ENCODE measurements at regions of chrX and their contacts with region 1.

Region 1: DNA sequence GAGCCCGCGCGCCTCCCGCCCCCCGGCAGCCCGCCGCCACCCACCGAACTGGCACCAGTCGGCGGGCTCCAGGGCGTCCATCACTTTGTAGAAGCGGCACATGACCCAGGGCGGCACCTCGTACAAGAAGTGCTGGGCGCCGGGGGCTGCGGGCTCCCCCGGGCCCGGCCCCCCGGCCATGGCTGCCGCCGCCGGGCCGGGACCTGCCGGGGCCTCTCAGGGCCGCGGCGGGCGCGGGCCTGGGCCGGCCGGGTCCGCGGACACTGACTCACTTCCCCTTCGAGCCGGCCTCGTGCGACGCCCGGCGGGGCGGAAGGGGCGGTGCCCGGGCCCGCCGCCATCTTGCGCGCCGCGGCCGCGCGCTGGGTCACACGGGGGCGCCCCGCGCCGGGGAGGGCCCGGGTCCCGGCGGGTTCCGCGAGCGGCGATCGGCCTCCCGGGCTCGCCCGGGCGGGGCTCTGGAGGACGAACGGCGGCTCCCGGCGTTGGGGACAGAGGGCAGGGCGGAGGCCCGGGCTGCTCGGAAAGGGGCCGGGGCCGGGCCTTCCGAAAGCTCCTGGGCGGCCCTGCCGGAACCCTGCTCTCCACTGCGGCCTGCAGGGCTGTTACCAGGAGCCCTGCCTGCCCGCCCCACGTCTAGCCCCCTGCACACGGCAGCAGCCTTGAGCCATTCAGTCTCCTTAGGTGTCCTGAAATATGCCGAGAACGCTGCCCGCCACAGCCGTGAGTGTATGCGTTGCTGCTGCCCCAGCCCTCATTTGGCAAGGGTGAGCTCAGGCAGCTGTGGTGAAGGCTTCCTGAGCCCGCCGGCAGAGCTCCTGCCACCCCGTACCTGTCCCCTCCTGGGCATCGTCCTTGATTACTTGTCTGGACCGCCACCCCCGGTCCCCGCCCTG is at the start of gene IRAK1:
- DNase-seq: peak; percentile 90
- H3K4me3 Mint-ChIP-seq: peak within 1 kb of the TSS; percentile 92
- H3K27ac Mint-ChIP-seq: peak within 1 kb of the TSS; percentile 94
- H3K4me1 Mint-ChIP-seq: peaks cover 11% of the 10 kb centered on the region
- H3K27me3 Mint-ChIP-seq: no peaks in the 10 kb centered on the region
- total RNA-seq, gene IRAK1: 177 and 192 TPM in 2 replicates

Region 2: DNA sequence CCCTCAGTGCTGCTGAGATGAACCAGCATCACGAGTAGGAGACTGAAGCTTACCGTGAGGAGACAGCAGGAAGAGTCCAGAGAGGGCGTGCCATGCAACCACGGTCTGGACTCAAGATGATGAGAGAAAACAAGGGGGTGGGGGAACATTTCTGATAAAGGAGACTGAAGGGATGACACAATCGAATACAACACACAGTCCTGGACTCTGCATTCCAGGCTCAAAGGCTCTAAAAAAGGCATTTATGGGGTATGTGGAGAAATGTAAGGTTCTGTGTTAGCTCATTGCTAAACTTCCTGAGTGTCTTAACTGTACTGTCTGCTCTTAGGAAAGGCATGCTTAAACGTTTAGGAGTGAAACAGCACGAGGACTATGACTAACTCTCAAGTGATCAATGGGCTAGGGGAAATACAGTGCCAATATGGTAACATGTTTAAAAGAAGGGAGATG is 20.5 kb after region 1 on chrX:
- intact Hi-C with region 1: loop called (anchors 2 kb)
- DNase-seq: no peak
- H3K4me3 Mint-ChIP-seq: no peak overlapping the region
- H3K27ac Mint-ChIP-seq: peak overlapping the region; percentile 64
- H3K4me1 Mint-ChIP-seq: peaks cover 21% of the 10 kb centered on the region
- H3K27me3 Mint-ChIP-seq: no peaks in the 10 kb centered on the region

Region 3: DNA sequence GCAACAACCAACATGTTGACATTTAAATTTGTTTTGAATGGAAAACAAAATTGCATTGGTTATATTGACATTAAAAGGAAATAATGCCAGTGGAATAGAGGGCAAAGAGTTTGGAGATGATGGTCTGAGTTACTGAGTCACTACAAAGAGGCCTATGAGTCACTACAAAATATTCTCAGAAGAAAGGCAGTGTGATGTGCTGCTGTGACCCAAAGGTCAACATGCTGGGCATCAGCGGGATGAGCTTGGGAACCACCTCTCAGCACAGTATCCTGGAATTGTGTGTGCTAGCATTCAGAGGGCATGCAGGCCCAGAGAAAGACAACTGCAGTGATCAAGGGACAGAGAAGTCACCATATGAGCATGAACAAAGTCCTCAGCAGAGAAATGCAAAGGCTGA is 1048.3 kb after region 1 on chrX:
- intact Hi-C with region 1: no loop called
- DNase-seq: peak; percentile 55
- H3K4me3 Mint-ChIP-seq: no peak overlapping the region
- H3K27ac Mint-ChIP-seq: peak overlapping the region; percentile 69
- H3K4me1 Mint-ChIP-seq: peaks cover 23% of the 10 kb centered on the region
- H3K27me3 Mint-ChIP-seq: no peaks in the 10 kb centered on the region

Measured in activated CD4-positive, alpha-beta T cell treated with anti-CD3 and anti-CD28 coated beads, Interleukin-2, amount 10 ng/mL, durations not matched to agents 24 days and 14 days (primary cell).